ENCODE measurements at regions of chr19 and their contacts with region 1.

Region 1: DNA sequence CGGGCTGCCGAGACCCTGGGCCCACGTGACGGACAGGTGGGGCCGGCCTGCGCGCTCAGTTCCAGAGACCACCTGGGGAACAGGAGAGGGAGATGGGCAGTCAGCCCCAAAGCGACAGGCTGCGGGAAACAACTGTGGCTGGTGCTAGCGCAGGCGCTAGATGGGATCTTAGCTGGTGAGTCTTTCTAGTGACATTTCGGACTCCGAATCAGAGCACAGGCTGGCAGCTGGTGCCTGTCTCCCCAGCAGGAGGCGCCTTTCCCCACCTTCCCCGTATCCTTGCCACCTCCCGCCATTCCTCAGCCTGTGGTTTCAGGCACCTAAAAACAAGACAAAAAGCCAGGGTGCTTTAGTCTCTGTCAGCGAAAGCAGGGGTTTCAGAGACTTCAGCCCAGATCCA is 19.4 kb upstream of the RANBP3 start:
- DNase-seq: no peak
- H3K4me3 ChIP-seq: no peak overlapping the region
- H3K27ac ChIP-seq: no peak overlapping the region
- H3K4me1 ChIP-seq: peaks cover 17 to 26% (median 23%) of the 10 kb centered on the region in 4 donors
- H3K27me3 ChIP-seq: peaks cover 0 to 3% (median 0%) of the 10 kb centered on the region in 4 donors
- CTCF ChIP-seq: no peak
- EP300 ChIP-seq: no peak
- POLR2A ChIP-seq: no peak

Region 2: GRCh38 chr19:5961969-5962945 is 35.1 kb before region 1 on chr19:
- intact Hi-C with region 1: no loop called
- DNase-seq: no peak
- H3K4me3 ChIP-seq: peak overlapping the region in 3 of 4 donors; percentile 10 to 29 (median 12)
- H3K27ac ChIP-seq: peak overlapping the region; percentile 79 to 85 (median 84)
- H3K4me1 ChIP-seq: peaks cover 96 to 100% (median 99%) of the 10 kb centered on the region in 4 donors
- H3K27me3 ChIP-seq: no peaks in the 10 kb centered on the region
- CTCF ChIP-seq: no peak
- EP300 ChIP-seq: no peak
- POLR2A ChIP-seq: no peak

Region 3: DNA sequence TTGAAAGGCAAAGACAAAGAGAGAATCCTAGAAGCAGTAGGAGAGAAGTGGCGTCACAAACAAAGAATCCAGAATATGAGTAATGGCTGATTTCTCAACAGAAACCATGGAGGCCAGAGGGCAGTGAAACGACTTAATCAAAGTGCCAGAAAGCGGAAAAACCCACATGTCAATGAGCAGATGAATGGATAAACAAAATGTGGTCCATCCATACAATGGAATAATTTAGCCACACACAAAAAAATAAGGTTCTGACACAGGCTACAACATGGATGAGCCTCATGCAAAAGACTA is 32.8 kb after region 1 on chr19:
- intact Hi-C with region 1: loop called (anchors 5 kb)
- DNase-seq: no peak
- H3K4me3 ChIP-seq: no peak overlapping the region
- H3K27ac ChIP-seq: no peak overlapping the region
- H3K4me1 ChIP-seq: peaks cover 0 to 13% (median 0%) of the 10 kb centered on the region in 4 donors
- H3K27me3 ChIP-seq: no peaks in the 10 kb centered on the region
- CTCF ChIP-seq: no peak
- EP300 ChIP-seq: no peak
- POLR2A ChIP-seq: no peak

Measured in esophagus muscularis mucosa (tissue), 4 donors.